PC-3 (cell line): ENCODE measurements at regions of chr6 and their contacts with region 1.

Region 1: DNA sequence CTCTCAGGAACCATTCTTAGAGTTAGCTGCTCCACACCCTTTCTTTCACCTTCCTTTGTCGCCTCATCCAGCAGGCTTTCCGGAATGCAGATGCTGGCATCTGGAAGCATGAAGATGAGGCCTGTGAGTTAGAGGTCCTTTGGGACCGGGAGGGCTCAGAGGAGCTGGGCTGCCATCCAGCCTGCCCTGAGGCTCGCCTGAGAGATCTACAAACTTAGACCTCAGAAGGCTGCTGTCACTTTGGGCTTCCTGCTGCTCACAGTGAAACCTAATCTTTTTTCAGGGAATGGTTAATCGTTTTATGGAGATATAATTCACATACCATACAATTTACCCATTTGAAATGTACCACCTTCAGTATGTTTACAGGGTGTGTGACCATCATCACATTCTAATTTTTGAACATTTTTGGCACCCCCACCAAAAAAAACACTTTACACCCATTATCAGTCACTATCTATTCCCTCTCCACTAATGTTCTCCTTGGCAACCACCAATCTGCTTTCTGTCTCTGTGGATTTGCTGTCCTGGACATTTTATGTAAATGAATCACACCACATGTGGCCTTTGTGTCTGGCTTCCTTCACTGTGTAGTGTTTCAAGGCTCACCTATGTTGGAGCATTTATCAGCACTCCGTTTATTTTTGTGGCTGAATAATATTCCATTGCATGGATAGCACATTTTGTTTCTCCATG is 20.0 kb upstream of the MPC1 start:
- DNase-seq: no peak
- ATAC-seq: no peak
- H3K4me3 ChIP-seq: no peak overlapping the region
- H3K27ac ChIP-seq: no peak overlapping the region
- H3K4me1 ChIP-seq: no peaks in the 10 kb centered on the region
- H3K27me3 ChIP-seq: no peaks in the 10 kb centered on the region
- CTCF ChIP-seq: no peak

Region 2: GRCh38 chr6:166275714-166276166 is 127.0 kb before region 1 on chr6:
- CTCF ChIA-PET with region 1: interaction called, 4 read pairs
- POLR2A ChIA-PET with region 1: no interaction called
- intact Hi-C with region 1: loop called (anchors 1 kb)
- DNase-seq: peak; percentile 52
- ATAC-seq: peak; percentile 88
- H3K4me3 ChIP-seq: no peak overlapping the region
- H3K27ac ChIP-seq: no peak overlapping the region
- H3K4me1 ChIP-seq: no peaks in the 10 kb centered on the region
- H3K27me3 ChIP-seq: no peaks in the 10 kb centered on the region
- CTCF ChIP-seq: peak; percentile 90

Region 3: DNA sequence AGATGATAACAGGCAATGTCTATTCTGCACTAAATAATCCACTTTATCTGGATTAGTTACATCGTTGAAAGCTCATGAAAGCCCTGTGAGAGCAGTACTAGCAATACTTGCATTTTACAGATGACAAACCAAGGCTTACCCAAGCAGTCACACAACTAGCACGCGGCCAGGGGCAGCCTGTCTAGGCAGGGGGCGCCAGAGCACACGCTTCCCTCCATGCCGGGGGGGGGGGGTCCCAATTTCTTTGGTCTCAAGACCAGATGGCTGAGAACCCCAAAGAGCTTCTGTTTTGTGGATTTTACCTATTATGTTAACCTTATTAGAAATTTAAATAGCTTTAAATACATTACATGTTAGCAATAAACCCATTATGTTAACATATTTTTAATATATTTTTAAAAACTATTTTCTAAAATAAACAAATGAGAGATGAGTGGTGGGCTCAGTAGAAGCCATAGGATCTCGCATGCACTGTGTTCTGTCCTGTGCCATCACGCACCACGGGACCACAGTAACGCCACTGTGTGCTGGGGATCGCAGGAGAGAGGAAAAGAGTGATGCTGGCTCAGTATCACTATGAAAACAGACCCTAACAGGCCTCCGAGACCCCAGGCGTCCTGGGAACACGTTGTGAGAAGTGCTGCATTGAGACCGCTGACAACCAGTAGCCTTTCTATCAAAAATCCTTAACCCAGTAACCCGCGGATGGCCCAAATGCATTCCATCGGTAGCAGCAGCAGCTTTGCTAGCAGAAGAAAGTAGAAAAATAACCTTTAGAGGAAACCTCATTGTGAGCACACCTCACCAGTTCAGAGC is 89.3 kb before region 1 on chr6:
- CTCF ChIA-PET with region 1: no interaction called
- POLR2A ChIA-PET with region 1: no interaction called
- intact Hi-C with region 1: loop called (anchors 1 kb)
- DNase-seq: peak; percentile 52
- ATAC-seq: peak; percentile 92
- H3K4me3 ChIP-seq: no peak overlapping the region
- H3K27ac ChIP-seq: no peak overlapping the region
- H3K4me1 ChIP-seq: no peaks in the 10 kb centered on the region
- H3K27me3 ChIP-seq: peaks cover 6% of the 10 kb centered on the region; the same call in 1 of the 2 replicates
- CTCF ChIP-seq: peak; percentile 69